Heart right ventricle (tissue), 16 donors: ENCODE measurements at regions of chr9 and their contacts with region 1.

Region 1: DNA sequence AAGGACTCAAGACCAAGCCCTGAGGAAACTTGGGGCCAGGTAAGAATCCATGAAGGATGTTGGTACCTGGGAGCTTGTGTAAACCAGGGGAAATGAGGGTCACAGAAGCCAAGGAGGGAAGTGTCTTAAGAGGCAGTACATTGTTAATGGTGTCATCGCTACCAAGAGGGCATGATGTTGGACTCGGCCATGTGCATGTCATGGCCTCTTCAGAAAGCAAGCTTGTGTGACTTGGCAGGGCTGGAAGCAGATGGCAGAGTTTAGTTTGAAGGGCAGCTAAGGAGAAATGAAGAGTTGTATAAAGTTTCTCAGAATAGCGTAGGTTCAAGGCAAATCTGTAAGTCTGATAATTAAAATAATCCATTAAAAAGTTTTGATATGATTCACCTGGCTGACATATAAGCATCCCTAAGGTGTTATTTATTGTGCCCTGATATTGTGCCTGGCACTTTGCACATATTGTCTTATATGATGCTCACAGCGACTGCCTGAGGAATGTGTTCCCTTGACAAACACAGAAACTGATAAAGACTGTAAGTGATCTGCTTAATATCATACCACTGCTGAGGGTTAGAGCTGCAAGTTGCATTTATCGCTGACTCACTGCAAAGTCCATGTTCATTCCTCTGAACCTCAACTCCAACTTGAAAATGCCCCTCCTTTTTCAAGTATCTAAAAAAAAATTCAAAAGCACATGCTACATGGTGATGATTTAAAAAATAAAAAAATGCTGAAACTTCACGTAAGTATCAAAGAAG is 81.3 kb upstream of the PTPN3 start:
- DNase-seq: no peak
- ATAC-seq: peak in 7 of 8 donors; percentile 28 to 80 (median 76)
- H3K4me3 ChIP-seq: no peak overlapping the region
- H3K27ac ChIP-seq: peak overlapping the region in 4 of 10 donors; percentile 11 to 39 (median 24)
- H3K4me1 ChIP-seq: peaks cover 0 to 14% (median 5%) of the 10 kb centered on the region in 9 donors
- H3K27me3 ChIP-seq: no peaks in the 10 kb centered on the region
- CTCF ChIP-seq: no peak

Region 2: DNA sequence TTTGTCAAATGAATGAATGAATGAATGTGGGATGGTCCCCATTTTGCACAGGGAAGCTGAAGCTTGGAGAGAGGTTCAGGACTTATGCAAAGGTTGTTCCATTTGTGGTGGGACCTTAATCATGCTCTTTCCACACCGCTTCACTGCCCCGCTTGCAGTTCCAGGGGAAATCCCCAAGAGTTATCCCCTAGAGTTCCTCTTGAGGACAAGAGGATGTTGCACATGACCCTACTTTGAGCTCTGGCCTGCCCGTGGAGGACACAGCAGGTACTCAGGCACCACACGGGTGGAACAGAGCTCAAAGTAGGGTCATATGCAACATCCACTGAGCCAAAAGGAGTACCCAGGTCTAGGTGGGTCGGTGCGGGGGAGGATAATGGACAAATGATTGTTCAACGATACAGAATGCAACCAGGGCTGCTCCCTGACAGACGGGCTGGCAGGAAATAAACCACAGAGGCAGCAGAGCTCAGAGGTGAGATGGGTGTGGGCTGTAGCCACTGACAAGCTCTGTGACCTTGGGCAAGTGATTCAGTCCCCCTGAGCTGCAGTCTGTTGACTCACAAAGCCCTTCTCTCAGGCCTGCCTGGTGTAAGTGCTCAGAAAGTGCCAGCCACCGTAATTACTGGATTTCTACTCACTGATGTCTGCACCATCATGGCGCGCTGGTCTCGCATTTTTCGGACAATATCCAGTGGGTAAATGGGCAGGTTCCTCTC is 198.2 kb before region 1 on chr9:
- intact Hi-C with region 1: no loop called
- DNase-seq: no peak
- ATAC-seq: peak in 1 of 8 donors; percentile 21
- H3K4me3 ChIP-seq: no peak overlapping the region
- H3K27ac ChIP-seq: no peak overlapping the region
- H3K4me1 ChIP-seq: no peaks in the 10 kb centered on the region
- H3K27me3 ChIP-seq: no peaks in the 10 kb centered on the region
- CTCF ChIP-seq: no peak

Region 3: GRCh38 chr9:109640580-109641371 is 61.4 kb after region 1 on chr9:
- intact Hi-C with region 1: loop called in 1 of 10 experiments (anchors 5 kb)
- DNase-seq: peak; percentile 47 to 61
- ATAC-seq: peak; percentile 55 to 85 (median 68)
- H3K4me3 ChIP-seq: peak overlapping the region; percentile 12 to 69 (median 58)
- H3K27ac ChIP-seq: peak overlapping the region in 5 of 10 donors; percentile 28 to 63 (median 46)
- H3K4me1 ChIP-seq: peaks cover 3 to 23% (median 16%) of the 10 kb centered on the region in 9 donors
- H3K27me3 ChIP-seq: peaks cover 4 to 45% (median 18%) of the 10 kb centered on the region in 7 donors
- CTCF ChIP-seq: no peak

Region 4: DNA sequence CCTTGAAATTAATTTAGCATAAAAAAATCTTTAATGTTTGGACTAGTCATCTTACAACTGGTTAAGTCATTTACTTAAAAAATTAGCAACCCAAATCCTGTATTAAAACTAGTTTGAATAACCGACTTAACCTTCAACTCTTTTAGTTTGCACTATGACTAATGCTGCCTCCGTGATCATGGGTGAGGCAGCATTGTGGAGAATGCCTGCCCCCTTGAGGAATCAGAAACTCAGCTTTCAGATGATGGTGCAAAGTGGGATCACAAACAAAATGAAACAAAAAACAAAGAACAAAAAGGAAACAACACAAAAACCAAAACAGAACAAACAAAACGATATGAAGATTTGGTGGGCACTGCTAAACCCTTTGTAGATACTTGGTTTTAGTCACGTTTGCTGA is 73.6 kb after region 1 on chr9:
- intact Hi-C with region 1: loop called in 9 of 10 experiments (anchors 1 to 10 kb)
- DNase-seq: peak; percentile 7 to 17
- ATAC-seq: peak in 7 of 8 donors; percentile 52 to 82 (median 77)
- H3K4me3 ChIP-seq: no peak overlapping the region
- H3K27ac ChIP-seq: no peak overlapping the region
- H3K4me1 ChIP-seq: no peaks in the 10 kb centered on the region
- H3K27me3 ChIP-seq: no peaks in the 10 kb centered on the region
- CTCF ChIP-seq: peak; percentile 14 to 72 (median 45)

Region 5: DNA sequence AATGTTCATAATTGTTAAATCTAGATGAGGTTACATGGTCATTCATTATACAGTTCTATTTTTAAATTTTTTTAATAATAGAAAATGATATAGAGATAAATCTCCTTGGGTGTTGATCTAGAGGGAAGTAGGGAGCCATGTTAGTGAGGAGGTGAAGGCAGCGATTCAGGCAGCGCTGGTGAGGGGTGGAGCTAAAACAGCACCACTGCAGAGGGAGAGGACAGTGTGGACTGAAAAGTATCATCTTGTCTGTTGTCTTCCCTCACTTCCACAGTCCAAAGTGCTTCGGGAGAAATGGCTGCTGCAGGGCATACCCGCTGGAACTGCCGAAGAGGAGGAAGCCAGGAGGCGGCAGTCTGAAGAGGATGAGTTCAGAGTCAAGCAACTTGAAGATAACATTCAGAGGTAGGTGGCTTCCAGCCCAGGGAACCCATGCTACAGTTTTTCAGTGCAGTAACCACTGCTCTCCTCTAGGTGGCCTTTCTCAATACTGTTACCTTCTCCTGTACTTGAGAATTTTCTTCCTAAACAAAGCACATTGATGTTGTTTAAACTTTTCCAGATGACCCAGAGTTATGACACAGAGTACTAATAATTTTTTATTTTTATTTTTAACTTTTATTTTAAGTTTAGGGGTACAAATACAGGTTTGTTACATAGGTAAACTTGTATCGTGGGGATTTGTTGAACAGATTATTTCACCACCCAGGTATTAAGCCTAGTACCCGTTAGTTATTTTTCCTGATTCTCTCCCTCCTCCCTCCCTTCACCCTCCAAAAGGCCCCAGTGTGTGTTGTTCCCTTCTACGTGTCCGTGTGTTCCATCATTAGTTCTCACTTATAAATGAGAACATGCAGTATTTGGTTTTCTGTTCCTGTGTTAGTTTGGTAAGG is 301.2 kb after region 1 on chr9:
- intact Hi-C with region 1: loop called in 6 of 10 experiments (anchors 5 to 10 kb)
- DNase-seq: no peak
- ATAC-seq: no peak
- H3K4me3 ChIP-seq: no peak overlapping the region
- H3K27ac ChIP-seq: no peak overlapping the region
- H3K4me1 ChIP-seq: peaks cover 0 to 27% (median 5%) of the 10 kb centered on the region in 9 donors
- H3K27me3 ChIP-seq: no peaks in the 10 kb centered on the region
- CTCF ChIP-seq: peak; percentile 14 to 73 (median 56)

Region 6: DNA sequence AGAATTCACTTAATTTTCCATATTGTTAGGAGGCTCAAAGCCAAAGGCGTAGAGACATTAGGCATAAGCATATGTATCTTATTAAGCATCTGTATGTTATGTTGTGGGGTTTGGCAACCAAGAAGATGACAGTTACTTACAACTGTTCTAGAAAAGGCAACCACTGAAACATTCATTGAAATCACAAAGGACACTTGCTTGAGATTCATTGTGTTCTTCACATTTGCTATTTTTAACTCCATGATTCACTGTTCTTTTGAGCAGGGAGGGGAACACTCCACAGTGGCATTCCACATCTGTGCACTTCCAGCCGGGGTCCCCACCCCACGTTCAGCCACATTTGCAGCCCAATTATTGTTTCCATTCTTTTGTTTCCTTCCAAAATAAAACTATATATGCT is 307.7 kb after region 1 on chr9:
- intact Hi-C with region 1: loop called in 6 of 10 experiments (anchors 5 to 10 kb)
- DNase-seq: peak in 1 of 2 donors; percentile 19
- ATAC-seq: peak; percentile 77 to 90 (median 86)
- H3K4me3 ChIP-seq: no peak overlapping the region
- H3K27ac ChIP-seq: peak overlapping the region; percentile 31 to 81 (median 68)
- H3K4me1 ChIP-seq: peaks cover 14 to 67% (median 46%) of the 10 kb centered on the region in 9 donors
- H3K27me3 ChIP-seq: no peaks in the 10 kb centered on the region
- CTCF ChIP-seq: no peak